ENCODE measurements at regions of chr16 and their contacts with region 1.

Region 1: DNA sequence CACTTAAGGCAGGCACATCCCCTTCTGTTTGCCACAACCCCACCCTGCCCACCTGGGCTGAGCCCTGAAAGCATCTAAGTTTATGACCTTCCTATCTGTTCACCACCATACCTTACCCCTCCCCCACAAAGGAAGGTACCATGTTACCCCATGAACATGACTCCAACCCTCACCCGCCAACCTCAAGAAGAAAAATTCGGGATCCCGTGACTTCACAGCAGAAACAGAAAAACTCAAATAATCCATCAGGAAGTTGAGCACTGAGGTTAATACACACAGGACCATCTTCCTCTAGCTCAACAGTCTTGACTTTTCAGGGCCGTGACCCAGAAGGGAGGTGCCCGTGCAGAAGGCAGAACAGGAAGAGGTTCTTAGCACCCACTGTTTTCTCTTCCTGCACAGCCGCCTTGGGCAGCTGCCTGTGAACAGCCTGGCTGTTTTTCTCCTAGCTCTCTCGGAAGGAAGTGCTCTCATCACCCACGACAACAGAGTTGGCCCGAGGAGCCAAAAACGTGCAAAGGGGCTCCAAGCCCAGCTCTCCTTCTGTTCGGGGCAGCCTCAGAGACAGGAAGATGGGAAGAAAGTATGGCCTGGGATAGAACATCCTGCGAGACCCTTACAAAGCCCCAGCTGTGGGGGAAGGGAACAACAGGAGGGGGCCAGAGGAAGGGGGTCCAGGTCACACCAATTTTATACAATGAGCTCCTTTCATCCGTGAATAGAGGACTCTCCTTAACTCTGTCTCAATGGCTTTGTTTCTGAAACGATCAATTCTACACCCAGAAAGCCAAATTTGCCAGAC is 101.1 kb downstream of the XYLT1 start:
- DNase-seq: no peak
- ATAC-seq: peak; percentile 82
- H3K4me3 Mint-ChIP-seq: peak overlapping the region; percentile 80
- H3K27ac Mint-ChIP-seq: peak overlapping the region; percentile 95
- H3K4me1 Mint-ChIP-seq: peaks cover 87% of the 10 kb centered on the region
- H3K27me3 Mint-ChIP-seq: no peaks in the 10 kb centered on the region
- CTCF ChIP-seq: no peak

Region 2: DNA sequence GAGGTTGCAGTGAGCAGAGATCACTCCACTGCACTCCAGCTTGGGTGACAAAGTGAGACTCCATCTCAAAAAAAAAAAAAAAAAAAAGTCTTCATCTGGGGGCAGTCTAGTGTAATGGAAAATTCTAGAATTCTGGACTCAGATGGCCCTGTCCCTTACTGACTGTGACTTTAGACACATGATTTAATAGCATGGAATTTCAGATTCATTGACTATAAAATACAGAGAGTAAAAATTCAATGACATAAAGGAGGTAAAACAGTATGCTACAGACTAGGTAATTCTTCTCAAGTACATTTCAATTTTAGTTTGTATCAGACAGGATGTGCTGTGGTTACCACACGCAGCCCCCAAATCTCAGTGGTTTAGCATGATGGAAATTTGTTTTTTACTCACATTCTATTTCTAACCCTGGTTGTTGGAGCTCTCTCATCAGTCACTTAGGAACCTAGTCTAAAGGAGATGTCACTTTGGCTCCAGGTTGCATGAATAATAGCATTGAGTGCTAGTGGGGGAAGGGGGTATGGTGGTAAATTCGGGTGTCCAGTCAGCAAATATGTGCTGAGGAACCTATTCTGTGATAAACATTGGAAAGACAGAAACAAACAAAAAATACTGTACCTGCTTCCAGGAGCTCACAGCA is 342.9 kb before region 1 on chr16:
- CTCF ChIA-PET with region 1: no interaction called
- POLR2A ChIA-PET with region 1: no interaction called
- intact Hi-C with region 1: loop called (anchors 10 kb)
- DNase-seq: no peak
- ATAC-seq: peak; percentile 62
- H3K4me3 Mint-ChIP-seq: peak overlapping the region; percentile 21
- H3K27ac Mint-ChIP-seq: peak overlapping the region; percentile 81
- H3K4me1 Mint-ChIP-seq: peaks cover 53% of the 10 kb centered on the region
- H3K27me3 Mint-ChIP-seq: no peaks in the 10 kb centered on the region
- CTCF ChIP-seq: no peak

Region 3: DNA sequence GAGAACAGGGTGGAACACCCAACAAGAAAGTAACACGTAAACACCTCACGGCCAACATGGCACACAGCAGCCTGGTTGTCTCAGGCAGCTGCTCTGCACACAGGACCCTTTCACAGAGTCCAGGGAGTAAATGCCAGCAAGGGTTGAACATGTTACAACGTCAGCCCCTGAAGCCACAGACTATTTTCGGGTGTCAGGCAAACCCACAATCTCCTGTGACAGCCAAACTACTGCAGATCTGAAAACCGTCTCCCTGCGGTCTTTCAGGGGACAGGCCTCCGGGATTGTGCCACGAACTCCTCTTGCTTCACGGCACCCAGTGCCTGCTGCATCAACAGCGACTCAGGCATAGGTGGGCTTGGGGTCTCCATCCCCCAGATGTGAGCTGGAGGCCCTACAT is 26.6 kb before region 1 on chr16:
- CTCF ChIA-PET with region 1: interaction called, 3 read pairs
- POLR2A ChIA-PET with region 1: interaction called, 7 read pairs
- intact Hi-C with region 1: loop called (anchors 2 kb)
- DNase-seq: no peak
- ATAC-seq: peak; percentile 48
- H3K4me3 Mint-ChIP-seq: peak overlapping the region; percentile 57
- H3K27ac Mint-ChIP-seq: peak overlapping the region; percentile 62
- H3K4me1 Mint-ChIP-seq: peaks cover 72% of the 10 kb centered on the region
- H3K27me3 Mint-ChIP-seq: no peaks in the 10 kb centered on the region
- CTCF ChIP-seq: no peak

Region 4: DNA sequence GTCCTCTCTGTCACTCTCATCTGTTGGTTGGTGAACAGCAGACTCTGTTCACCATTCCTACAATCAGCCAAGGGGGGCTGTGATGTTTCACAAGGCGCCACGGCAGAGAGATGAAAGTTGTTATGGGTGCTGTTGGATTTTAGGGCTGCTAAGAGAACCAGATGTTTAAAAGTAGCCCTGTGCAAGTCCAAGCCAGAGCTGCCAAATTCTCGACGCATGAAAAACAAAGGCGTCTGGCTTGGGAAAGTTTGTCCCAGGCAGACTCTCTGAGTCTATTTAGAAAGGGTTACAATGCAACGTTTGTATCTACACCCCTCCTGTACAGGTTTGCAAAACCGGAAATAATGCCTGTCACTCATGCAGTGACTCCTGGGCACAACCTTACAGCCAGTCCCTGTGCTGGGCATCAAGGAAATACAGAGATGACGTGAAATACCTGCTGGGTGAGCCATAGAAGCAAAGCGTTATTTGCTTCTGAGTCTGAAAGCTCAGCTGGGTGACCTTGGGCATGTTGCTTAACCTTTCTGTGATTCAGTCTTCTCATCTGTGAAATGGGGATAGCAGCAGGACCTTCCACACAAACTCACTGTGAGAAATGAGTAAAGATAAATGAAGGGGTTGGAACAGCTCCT is 26.3 kb after region 1 on chr16:
- CTCF ChIA-PET with region 1: no interaction called
- POLR2A ChIA-PET with region 1: interaction called, 10 read pairs
- intact Hi-C with region 1: no loop called
- DNase-seq: no peak
- ATAC-seq: no peak
- H3K4me3 Mint-ChIP-seq: no peak overlapping the region
- H3K27ac Mint-ChIP-seq: no peak overlapping the region
- H3K4me1 Mint-ChIP-seq: peaks cover 33% of the 10 kb centered on the region
- H3K27me3 Mint-ChIP-seq: no peaks in the 10 kb centered on the region
- CTCF ChIP-seq: no peak

Measured in activated B cell treated with CpG ODN at 0.5 μM for 24 hours (primary cell).